ENCODE measurements at regions of chr5 and their contacts with region 1.

Region 1: GRCh38 chr5:135834639-135835529 is at the start of gene SLC25A48:
- DNase-seq: peak; percentile 78
- H3K4me3 Mint-ChIP-seq: peak within 1 kb of the TSS; percentile 67
- H3K27ac Mint-ChIP-seq: no peak within 1 kb of the TSS
- H3K4me1 Mint-ChIP-seq: no peaks in the 10 kb centered on the region
- H3K27me3 Mint-ChIP-seq: peaks cover 89% of the 10 kb centered on the region
- CTCF ChIP-seq: peak; percentile 66
- total RNA-seq, gene SLC25A48: not detected in 2 replicates

Region 2: DNA sequence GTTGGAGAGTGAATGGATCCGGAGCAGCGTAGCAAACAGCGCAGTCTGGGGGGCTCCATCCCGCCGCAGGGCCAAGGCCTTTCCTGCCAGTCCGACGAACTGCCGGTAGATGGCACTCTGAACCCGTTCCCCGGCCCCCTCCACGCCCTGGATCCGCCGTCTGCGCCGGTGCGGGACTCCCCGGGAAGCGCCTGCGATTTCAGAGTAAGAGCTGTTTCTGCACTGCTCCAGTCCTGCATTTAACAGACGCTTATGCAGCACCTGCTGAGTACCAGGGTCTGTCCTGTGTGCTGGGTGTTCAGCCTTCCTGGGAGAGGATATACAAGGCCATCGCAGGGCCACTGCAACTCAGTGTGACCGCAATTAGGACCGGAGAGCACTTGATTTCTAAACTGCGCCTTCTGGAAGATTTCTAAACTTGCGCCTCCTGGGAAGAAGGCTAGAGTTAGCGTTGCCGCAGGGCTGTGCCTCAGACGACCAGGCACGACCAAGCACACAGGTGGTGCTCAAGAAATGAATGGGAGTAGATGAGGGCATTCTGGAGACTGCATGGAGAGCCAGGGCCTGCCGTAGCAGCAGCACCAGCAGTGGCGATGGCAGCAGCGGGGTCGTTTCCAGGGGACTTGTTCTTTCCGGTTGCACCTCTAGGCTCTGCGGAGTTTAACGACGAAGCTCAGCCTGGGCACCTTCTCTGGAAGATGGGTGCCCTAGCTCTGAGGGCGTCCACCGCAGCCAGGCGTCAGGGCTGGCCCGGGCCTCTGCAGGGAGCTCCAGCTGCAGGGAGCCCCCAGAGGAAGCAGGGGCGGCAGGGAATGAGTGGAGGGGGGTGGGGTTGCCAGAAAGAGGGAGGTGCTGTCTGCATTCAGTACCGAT is 368.5 kb before region 1 on chr5:
- CTCF ChIA-PET with region 1: interaction called, 3 read pairs
- intact Hi-C with region 1: loop called (anchors 2 kb)
- DNase-seq: peak; percentile 87
- H3K4me3 Mint-ChIP-seq: peak overlapping the region; percentile 51
- H3K27ac Mint-ChIP-seq: no peak overlapping the region
- H3K4me1 Mint-ChIP-seq: peaks cover 8% of the 10 kb centered on the region
- H3K27me3 Mint-ChIP-seq: peaks cover 14% of the 10 kb centered on the region
- CTCF ChIP-seq: peak; percentile 88

Measured in Calu3 (cell line).